ENCODE measurements at regions of chr15 and their contacts with region 1.

Region 1: GRCh38 chr15:95169541-95170459 is 938.4 kb downstream of the MCTP2 start:
- DNase-seq: peak in 2 of 4 experiments; percentile 29 to 60
- ATAC-seq: peak; percentile 74
- H3K4me3 ChIP-seq: peak overlapping the region; percentile 13; the same call in 1 of the 2 replicates
- H3K27ac ChIP-seq: peak overlapping the region; percentile 88
- H3K4me1 ChIP-seq: peaks cover 19 to 36% of the 10 kb centered on the region in 2 experiments
- H3K27me3 ChIP-seq: no peaks in the 10 kb centered on the region
- CTCF ChIP-seq: no peak
- EP300 ChIP-seq: no peak
- POLR2A ChIP-seq: no peak
- RAD21 ChIP-seq: no peak

Region 2: GRCh38 chr15:95259513-95259912 is 89.7 kb after region 1 on chr15:
- CTCF ChIA-PET with region 1: no interaction called
- POLR2A ChIA-PET with region 1: no interaction called
- in situ Hi-C with region 1: no loop called
- intact Hi-C with region 1: loop called (anchors 5 kb)
- DNase-seq: peak; percentile 49 to 85 (median 58)
- ATAC-seq: peak; percentile 95
- H3K4me3 ChIP-seq: no peak overlapping the region
- H3K27ac ChIP-seq: no peak overlapping the region
- H3K4me1 ChIP-seq: peaks cover 0 to 4% of the 10 kb centered on the region in 2 experiments; a peak in 3 of 5 replicates
- H3K27me3 ChIP-seq: no peaks in the 10 kb centered on the region; a peak in 1 of 5 replicates
- CTCF ChIP-seq: peak; percentile 64 to 85 (median 79)
- EP300 ChIP-seq: 0 out of 2 replicates have a peak, but pooled peaks have one; percentile 2
- POLR2A ChIP-seq: no peak
- RAD21 ChIP-seq: peak; percentile 85 to 91

Measured in K562 (cell line).